ENCODE measurements at regions of chr2 and their contacts with region 1.

Region 1: DNA sequence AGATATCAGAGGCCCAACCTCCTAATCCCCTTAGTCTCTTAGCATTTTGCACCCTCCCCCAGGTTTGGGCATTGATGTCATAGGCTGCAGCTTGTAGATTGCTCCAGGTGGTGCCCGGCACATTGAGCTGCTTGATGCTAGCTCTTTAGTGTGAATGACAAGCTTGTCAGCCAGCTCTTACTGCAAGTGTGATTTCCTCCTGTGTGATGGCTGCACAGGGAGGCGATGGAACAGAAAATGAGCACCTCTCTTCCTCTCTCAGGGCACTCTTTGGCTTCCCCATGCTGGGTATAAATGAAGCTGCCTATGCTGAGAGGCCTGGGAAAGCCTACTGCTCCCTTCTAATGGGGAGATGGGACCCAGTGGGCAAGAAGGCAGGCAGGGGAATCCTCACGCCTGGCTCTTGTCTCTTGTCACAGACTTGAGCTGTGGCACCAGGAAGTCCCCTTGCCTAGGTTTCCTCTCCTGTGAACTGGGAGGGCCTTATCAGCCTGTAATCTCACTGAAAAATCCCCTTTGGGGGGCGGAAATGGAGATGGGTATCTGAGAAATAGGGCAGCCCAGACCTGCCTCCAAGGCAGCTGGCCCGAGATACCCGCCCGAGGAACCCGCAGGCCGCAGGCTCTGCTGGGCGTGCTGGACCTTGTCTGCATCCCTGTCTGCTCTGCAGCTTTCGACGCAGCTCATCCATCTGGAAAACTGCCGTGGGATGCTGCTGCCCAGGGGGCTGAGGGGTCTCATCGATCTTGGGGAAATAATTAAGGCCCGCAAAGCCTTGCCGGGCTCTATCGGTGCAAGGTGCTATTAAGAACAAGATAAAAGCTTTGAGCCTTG is 163.5 kb upstream of the CXCR4 start:
- DNase-seq: peak; percentile 25
- ATAC-seq: peak; percentile 85
- H3K4me3 ChIP-seq: no peak overlapping the region
- H3K27ac ChIP-seq: no peak overlapping the region
- H3K4me1 ChIP-seq: peaks cover 22% of the 10 kb centered on the region
- H3K27me3 ChIP-seq: no peaks in the 10 kb centered on the region; a peak in 1 of 4 replicates
- CTCF ChIP-seq: no peak
- EP300 ChIP-seq: no peak
- POLR2A ChIP-seq: no peak
- RAD21 ChIP-seq: no peak

Region 2: DNA sequence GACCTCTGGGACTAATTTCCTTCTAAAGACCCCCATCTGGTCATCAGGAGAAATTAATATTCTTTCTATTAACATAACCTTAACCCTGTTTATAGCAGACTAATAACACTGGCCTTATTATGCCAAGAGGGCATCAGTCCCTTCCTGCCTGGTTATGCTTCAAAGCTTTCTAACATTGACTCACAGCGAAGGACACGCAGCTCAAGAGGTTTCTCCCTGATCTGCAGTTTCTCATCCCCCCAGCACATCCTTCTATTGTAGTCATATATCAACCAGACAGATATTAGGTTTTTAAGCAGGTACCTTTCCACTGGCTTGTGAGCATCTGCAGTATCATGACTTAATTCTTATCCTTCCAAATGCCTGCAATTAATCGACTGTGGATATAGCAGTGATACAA is 63.5 kb before region 1 on chr2:
- CTCF ChIA-PET with region 1: interaction called, 4 read pairs
- POLR2A ChIA-PET with region 1: interaction called, 3 read pairs
- RAD21 ChIA-PET with region 1: interaction called, 17 read pairs
- SMC1A ChIA-PET with region 1: interaction called, 7 read pairs
- in situ Hi-C with region 1: no loop called
- intact Hi-C with region 1: no loop called
- DNase-seq: no peak
- ATAC-seq: peak; percentile 77
- H3K4me3 ChIP-seq: no peak overlapping the region
- H3K27ac ChIP-seq: no peak overlapping the region
- H3K4me1 ChIP-seq: no peaks in the 10 kb centered on the region
- H3K27me3 ChIP-seq: peaks cover 0 to 9% of the 10 kb centered on the region in 2 experiments; a peak in 1 of 4 replicates
- CTCF ChIP-seq: no peak
- EP300 ChIP-seq: peak in 1 of 2 experiments; percentile 40; a peak in 1 of 4 replicates
- POLR2A ChIP-seq: no peak
- RAD21 ChIP-seq: no peak

Region 3: GRCh38 chr2:136238286-136239078 is 43.0 kb before region 1 on chr2:
- CTCF ChIA-PET with region 1: interaction called, 8 read pairs
- POLR2A ChIA-PET with region 1: interaction called, 4 read pairs
- RAD21 ChIA-PET with region 1: interaction called, 12 read pairs
- SMC1A ChIA-PET with region 1: interaction called, 17 read pairs
- in situ Hi-C with region 1: no loop called
- intact Hi-C with region 1: no loop called
- DNase-seq: peak; percentile 78
- ATAC-seq: peak; percentile 89
- H3K4me3 ChIP-seq: no peak overlapping the region
- H3K27ac ChIP-seq: no peak overlapping the region
- H3K4me1 ChIP-seq: peaks cover 18% of the 10 kb centered on the region
- H3K27me3 ChIP-seq: no peaks in the 10 kb centered on the region
- CTCF ChIP-seq: no peak
- EP300 ChIP-seq: peak; percentile 97 to 99
- POLR2A ChIP-seq: no peak
- RAD21 ChIP-seq: no peak

Region 4: GRCh38 chr2:136246086-136246669 is 35.3 kb before region 1 on chr2:
- CTCF ChIA-PET with region 1: interaction called, 4 read pairs
- POLR2A ChIA-PET with region 1: interaction called, 14 read pairs
- RAD21 ChIA-PET with region 1: interaction called, 8 read pairs
- SMC1A ChIA-PET with region 1: interaction called, 17 read pairs
- in situ Hi-C with region 1: no loop called
- intact Hi-C with region 1: no loop called
- DNase-seq: peak; percentile 60
- ATAC-seq: peak; percentile 96
- H3K4me3 ChIP-seq: no peak overlapping the region
- H3K27ac ChIP-seq: no peak overlapping the region; the same call in 1 of the 2 replicates
- H3K4me1 ChIP-seq: peaks cover 3% of the 10 kb centered on the region; the same call in 1 of the 2 replicates
- H3K27me3 ChIP-seq: 0 out of 4 replicates have a peak, but pooled peaks cover 0 to 2% of the 10 kb centered on the region in 2 experiments
- CTCF ChIP-seq: no peak
- EP300 ChIP-seq: peak; percentile 78 to 87; a peak in 3 of 4 replicates
- POLR2A ChIP-seq: no peak
- RAD21 ChIP-seq: no peak

Region 5: GRCh38 chr2:136305517-136306192 is 24.2 kb after region 1 on chr2:
- CTCF ChIA-PET with region 1: interaction called, 25 read pairs
- POLR2A ChIA-PET with region 1: interaction called, 12 read pairs
- RAD21 ChIA-PET with region 1: interaction called, 20 read pairs
- SMC1A ChIA-PET with region 1: interaction called, 66 read pairs
- in situ Hi-C with region 1: no loop called
- intact Hi-C with region 1: no loop called
- DNase-seq: no peak
- ATAC-seq: peak; percentile 93
- H3K4me3 ChIP-seq: no peak overlapping the region
- H3K27ac ChIP-seq: no peak overlapping the region
- H3K4me1 ChIP-seq: peaks cover 6% of the 10 kb centered on the region
- H3K27me3 ChIP-seq: peaks cover 0 to 5% of the 10 kb centered on the region in 2 experiments; a peak in 1 of 4 replicates
- CTCF ChIP-seq: no peak
- EP300 ChIP-seq: peak; percentile 62 to 64; a peak in 1 of 4 replicates
- POLR2A ChIP-seq: no peak
- RAD21 ChIP-seq: no peak

Region 6: GRCh38 chr2:136319237-136319636 is 37.7 kb after region 1 on chr2:
- CTCF ChIA-PET with region 1: interaction called, 6 read pairs
- POLR2A ChIA-PET with region 1: interaction called, 7 read pairs
- RAD21 ChIA-PET with region 1: interaction called, 11 read pairs
- SMC1A ChIA-PET with region 1: interaction called, 10 read pairs
- in situ Hi-C with region 1: no loop called
- intact Hi-C with region 1: no loop called
- DNase-seq: no peak
- ATAC-seq: peak; percentile 81
- H3K4me3 ChIP-seq: no peak overlapping the region
- H3K27ac ChIP-seq: no peak overlapping the region
- H3K4me1 ChIP-seq: peaks cover 5% of the 10 kb centered on the region; the same call in 1 of the 2 replicates
- H3K27me3 ChIP-seq: no peaks in the 10 kb centered on the region
- CTCF ChIP-seq: no peak
- EP300 ChIP-seq: no peak
- POLR2A ChIP-seq: no peak
- RAD21 ChIP-seq: no peak

Region 7: GRCh38 chr2:136510244-136510643 is 228.7 kb after region 1 on chr2:
- CTCF ChIA-PET with region 1: no interaction called
- POLR2A ChIA-PET with region 1: no interaction called
- RAD21 ChIA-PET with region 1: no interaction called
- SMC1A ChIA-PET with region 1: no interaction called
- in situ Hi-C with region 1: no loop called
- intact Hi-C with region 1: no loop called
- DNase-seq: no peak
- ATAC-seq: no peak
- H3K4me3 ChIP-seq: no peak overlapping the region
- H3K27ac ChIP-seq: no peak overlapping the region
- H3K4me1 ChIP-seq: no peaks in the 10 kb centered on the region
- H3K27me3 ChIP-seq: no peaks in the 10 kb centered on the region; a peak in 1 of 4 replicates
- CTCF ChIP-seq: no peak
- EP300 ChIP-seq: no peak
- POLR2A ChIP-seq: no peak
- RAD21 ChIP-seq: no peak